Sigmoid colon (tissue), 7 donors: ENCODE measurements at regions of chr7 and their contacts with region 1.

Region 1: DNA sequence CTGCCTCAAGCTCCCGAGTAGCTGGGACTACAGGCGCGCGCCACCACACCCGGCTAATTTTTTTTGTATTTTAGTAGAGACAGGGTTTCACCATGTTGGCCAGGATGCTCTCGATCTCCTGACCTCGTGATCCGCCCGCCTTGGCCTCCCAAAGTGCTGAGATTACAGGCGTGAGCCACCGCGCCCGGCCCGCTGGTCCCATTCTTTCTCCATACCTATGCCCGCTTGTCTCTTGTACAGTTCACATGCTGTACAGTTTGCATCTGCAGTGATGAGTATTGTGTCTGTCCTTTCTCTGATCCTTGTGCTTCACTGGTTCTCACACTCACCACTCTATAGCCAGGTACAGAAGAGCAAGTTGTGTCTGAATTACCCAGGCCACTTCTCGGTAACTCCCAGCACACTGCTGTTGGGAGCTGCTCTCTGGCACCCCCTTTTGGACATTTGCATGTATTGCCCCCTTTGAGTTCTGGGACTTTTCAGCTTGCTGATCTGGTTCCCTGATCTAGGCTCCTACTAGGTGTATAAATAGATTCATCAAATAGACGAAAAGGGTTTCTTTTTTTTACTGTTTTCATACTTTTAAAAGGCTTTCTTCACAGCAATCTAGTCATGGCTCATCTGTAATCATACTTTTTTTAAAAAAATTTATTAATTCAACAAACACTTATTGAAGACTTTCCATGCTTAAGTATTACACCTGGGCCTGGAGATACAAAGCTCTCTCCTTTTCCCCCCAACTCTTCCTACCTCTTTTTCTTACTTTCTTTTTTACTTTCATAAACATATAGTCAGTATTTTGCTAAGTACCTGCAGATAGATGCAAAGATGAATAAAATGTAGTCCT is 53.5 kb downstream of the AOAH start:
- DNase-seq: no peak
- H3K4me3 ChIP-seq: no peak overlapping the region
- H3K27ac ChIP-seq: no peak overlapping the region
- H3K4me1 ChIP-seq: no peaks in the 10 kb centered on the region
- H3K27me3 ChIP-seq: peaks cover 0 to 2% (median 0%) of the 10 kb centered on the region in 3 donors
- CTCF ChIP-seq: peak; percentile 29 to 75 (median 63)
- EP300 ChIP-seq: no peak
- POLR2A ChIP-seq: no peak

Region 2: DNA sequence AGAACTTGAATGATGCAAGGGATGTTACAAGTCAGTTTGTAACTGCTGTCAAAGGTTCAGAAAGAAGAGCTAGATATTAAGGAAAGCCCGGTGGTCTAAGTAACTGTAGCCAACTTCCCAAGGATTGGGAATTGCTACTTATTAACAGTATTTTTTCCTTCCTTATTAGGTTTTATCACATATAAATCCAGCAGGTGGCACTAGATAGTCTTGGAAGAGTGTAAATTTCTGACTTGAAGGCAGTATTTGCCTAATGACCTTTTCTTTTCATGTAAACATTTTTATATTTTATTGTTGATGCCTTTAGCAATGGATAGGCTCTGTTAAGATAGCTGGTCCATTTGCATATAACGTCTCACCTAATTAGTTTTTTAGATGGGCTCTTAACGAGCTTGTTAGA is 229.9 kb before region 1 on chr7:
- intact Hi-C with region 1: loop called (anchors 2 kb)
- DNase-seq: no peak
- H3K4me3 ChIP-seq: no peak overlapping the region
- H3K27ac ChIP-seq: no peak overlapping the region
- H3K4me1 ChIP-seq: no peaks in the 10 kb centered on the region
- H3K27me3 ChIP-seq: no peaks in the 10 kb centered on the region
- CTCF ChIP-seq: peak in 1 of 4 experiments; percentile 19
- EP300 ChIP-seq: no peak
- POLR2A ChIP-seq: no peak

Region 3: GRCh38 chr7:36487756-36488336 is 183.0 kb before region 1 on chr7:
- intact Hi-C with region 1: loop called (anchors 2 kb)
- DNase-seq: no peak
- H3K4me3 ChIP-seq: no peak overlapping the region
- H3K27ac ChIP-seq: no peak overlapping the region
- H3K4me1 ChIP-seq: no peaks in the 10 kb centered on the region
- H3K27me3 ChIP-seq: no peaks in the 10 kb centered on the region
- CTCF ChIP-seq: peak in 3 of 4 experiments; percentile 23 to 59 (median 46)
- EP300 ChIP-seq: no peak
- POLR2A ChIP-seq: no peak

Region 4: DNA sequence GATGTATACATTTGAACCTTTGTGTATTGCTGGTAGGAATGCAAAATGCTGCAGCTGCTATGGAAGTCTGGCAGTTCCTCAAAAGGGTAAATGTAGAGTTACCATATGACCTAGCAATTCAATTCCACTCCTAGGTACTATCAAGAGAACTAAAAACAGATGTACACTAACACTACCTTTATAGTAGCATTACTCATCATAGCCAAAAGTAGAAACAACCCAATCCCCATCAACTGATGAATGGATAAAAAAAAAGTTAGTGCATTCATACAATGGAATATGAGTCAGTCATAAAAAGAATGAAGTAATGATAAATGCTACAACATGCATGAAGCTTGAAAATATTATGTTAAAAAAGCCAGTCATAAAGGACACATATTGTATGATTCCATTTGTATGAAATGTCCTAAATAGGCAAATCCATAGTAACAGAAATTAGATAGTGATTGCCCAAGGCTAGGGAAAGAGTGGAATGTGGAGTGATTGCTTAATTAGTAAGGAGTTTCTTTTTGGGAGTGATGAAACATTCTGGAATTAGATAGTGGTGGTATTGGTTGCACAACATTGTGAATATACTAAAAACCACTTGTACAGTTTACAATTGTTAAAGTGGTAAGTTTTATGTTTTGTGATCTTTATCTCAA is 149.8 kb after region 1 on chr7:
- intact Hi-C with region 1: no loop called
- DNase-seq: no peak
- H3K4me3 ChIP-seq: no peak overlapping the region
- H3K27ac ChIP-seq: no peak overlapping the region
- H3K4me1 ChIP-seq: no peaks in the 10 kb centered on the region
- H3K27me3 ChIP-seq: no peaks in the 10 kb centered on the region
- CTCF ChIP-seq: no peak
- EP300 ChIP-seq: no peak
- POLR2A ChIP-seq: no peak